ENCODE measurements at regions of chr4 and their contacts with region 1.

Region 1: GRCh38 chr4:181528570-181529184 is 714.5 kb upstream of the TENM3 start:
- DNase-seq: peak; percentile 18 to 59 (median 34)
- ATAC-seq: peak; percentile 75; the same call in 2 of the 3 replicates
- H3K4me3 ChIP-seq: no peak overlapping the region
- H3K27ac ChIP-seq: no peak overlapping the region
- H3K4me1 ChIP-seq: no peaks in the 10 kb centered on the region
- H3K27me3 ChIP-seq: no peaks in the 10 kb centered on the region
- CTCF ChIP-seq: peak; percentile 52 to 65 (median 59)
- EP300 ChIP-seq: no peak
- POLR2A ChIP-seq: no peak
- RAD21 ChIP-seq: peak; percentile 58 to 71

Region 2: GRCh38 chr4:180664766-180665368 is 863.8 kb before region 1 on chr4:
- CTCF ChIA-PET with region 1: no interaction called
- POLR2A ChIA-PET with region 1: no interaction called
- in situ Hi-C with region 1: no loop called
- intact Hi-C with region 1: loop called (anchors 2 kb)
- DNase-seq: peak; percentile 33 to 70 (median 38)
- ATAC-seq: peak; percentile 68; the same call in 2 of the 3 replicates
- H3K4me3 ChIP-seq: no peak overlapping the region
- H3K27ac ChIP-seq: no peak overlapping the region
- H3K4me1 ChIP-seq: no peaks in the 10 kb centered on the region
- H3K27me3 ChIP-seq: no peaks in the 10 kb centered on the region
- CTCF ChIP-seq: peak; percentile 20 to 60 (median 54); a peak in 2 of 6 replicates
- EP300 ChIP-seq: no peak
- POLR2A ChIP-seq: no peak
- RAD21 ChIP-seq: peak; percentile 26 to 50; a peak in 2 of 4 replicates

Region 3: GRCh38 chr4:181301735-181302710 is 226.7 kb before region 1 on chr4:
- CTCF ChIA-PET with region 1: no interaction called
- POLR2A ChIA-PET with region 1: no interaction called
- in situ Hi-C with region 1: no loop called
- intact Hi-C with region 1: loop called (anchors 2 kb)
- DNase-seq: peak; percentile 9 to 45 (median 34)
- ATAC-seq: peak; percentile 42; the same call in 1 of the 3 replicates
- H3K4me3 ChIP-seq: no peak overlapping the region
- H3K27ac ChIP-seq: no peak overlapping the region
- H3K4me1 ChIP-seq: no peaks in the 10 kb centered on the region
- H3K27me3 ChIP-seq: no peaks in the 10 kb centered on the region
- CTCF ChIP-seq: peak; percentile 13 to 53 (median 43); a peak in 3 of 6 replicates
- EP300 ChIP-seq: no peak
- POLR2A ChIP-seq: no peak
- RAD21 ChIP-seq: peak; percentile 12 to 24; a peak in 1 of 4 replicates

Region 4: GRCh38 chr4:181323061-181323460 is 205.6 kb before region 1 on chr4:
- CTCF ChIA-PET with region 1: no interaction called
- POLR2A ChIA-PET with region 1: no interaction called
- in situ Hi-C with region 1: no loop called
- intact Hi-C with region 1: no loop called
- DNase-seq: no peak
- ATAC-seq: no peak
- H3K4me3 ChIP-seq: no peak overlapping the region
- H3K27ac ChIP-seq: no peak overlapping the region
- H3K4me1 ChIP-seq: no peaks in the 10 kb centered on the region
- H3K27me3 ChIP-seq: no peaks in the 10 kb centered on the region
- CTCF ChIP-seq: no peak
- EP300 ChIP-seq: no peak
- POLR2A ChIP-seq: no peak
- RAD21 ChIP-seq: no peak